SK-N-SH (cell line): ENCODE measurements at regions of chr17 and their contacts with region 1.

Region 1: GRCh38 chr17:61412143-61412859 is 12.7 kb downstream of the TBX2 start:
- DNase-seq: peak; percentile 99
- H3K4me3 ChIP-seq: peak overlapping the region; percentile 77 to 82
- H3K27ac ChIP-seq: peak overlapping the region; percentile 80 to 90
- H3K4me1 ChIP-seq: peaks cover 5 to 51% of the 10 kb centered on the region in 2 experiments; a peak in 2 of 4 replicates
- H3K27me3 ChIP-seq: no peaks in the 10 kb centered on the region
- CTCF ChIP-seq: peak; percentile 98
- EP300 ChIP-seq: no peak; a peak in 1 of 4 replicates
- RAD21 ChIP-seq: peak; percentile 96

Region 2: DNA sequence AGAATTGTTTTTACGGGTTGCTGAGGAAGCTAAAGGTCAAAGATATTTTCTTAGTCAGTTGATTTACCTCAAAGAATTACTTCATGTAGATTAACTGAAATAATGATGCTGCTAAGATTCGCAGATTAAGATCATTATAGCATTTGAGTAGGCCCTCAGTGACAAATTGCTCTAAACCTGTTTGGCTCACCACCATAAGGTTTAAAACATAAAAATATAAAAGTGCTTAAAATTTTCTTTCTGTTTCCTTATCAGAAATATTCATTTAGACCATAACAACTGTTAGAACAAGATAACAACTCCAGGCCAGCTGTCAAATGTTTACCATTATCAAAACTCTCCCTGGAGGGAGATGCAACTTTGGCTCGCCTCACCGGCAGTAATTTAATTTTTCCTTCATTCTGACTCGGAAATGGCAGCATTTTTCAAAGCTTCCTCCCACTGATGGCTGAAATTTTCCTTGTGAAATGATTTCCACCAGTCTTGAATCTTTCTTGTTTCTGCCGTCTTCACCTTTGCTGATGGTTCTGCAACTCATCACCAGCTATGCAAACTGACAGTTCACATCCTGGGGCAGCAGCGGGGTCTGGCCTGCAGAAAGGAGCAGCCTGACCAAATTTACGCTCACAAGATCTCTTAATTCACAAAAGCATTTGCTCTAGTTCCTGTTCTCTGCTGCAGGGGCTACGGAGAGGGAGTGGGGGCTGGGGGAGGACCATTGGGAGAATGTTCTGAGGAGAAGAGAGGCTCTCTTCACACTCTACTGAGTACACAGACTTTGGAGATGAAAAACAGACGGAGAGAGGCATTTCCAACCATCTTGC is 267.3 kb before region 1 on chr17:
- CTCF ChIA-PET with region 1: interaction called, 14 read pairs
- POLR2A ChIA-PET with region 1: no interaction called
- DNase-seq: peak; percentile 84
- H3K4me3 ChIP-seq: peak overlapping the region; percentile 4 to 45; a peak in 3 of 4 replicates
- H3K27ac ChIP-seq: peak overlapping the region; percentile 91 to 94
- H3K4me1 ChIP-seq: peaks cover 41 to 58% of the 10 kb centered on the region in 2 experiments
- H3K27me3 ChIP-seq: no peaks in the 10 kb centered on the region
- CTCF ChIP-seq: no peak
- EP300 ChIP-seq: peak; percentile 98 to 99
- RAD21 ChIP-seq: peak; percentile 62

Region 3: GRCh38 chr17:61265397-61265796 is 146.9 kb before region 1 on chr17:
- CTCF ChIA-PET with region 1: no interaction called
- POLR2A ChIA-PET with region 1: no interaction called
- DNase-seq: no peak
- H3K4me3 ChIP-seq: no peak overlapping the region
- H3K27ac ChIP-seq: no peak overlapping the region
- H3K4me1 ChIP-seq: peaks cover 3 to 4% of the 10 kb centered on the region in 2 experiments; a peak in 2 of 4 replicates
- H3K27me3 ChIP-seq: no peaks in the 10 kb centered on the region
- CTCF ChIP-seq: no peak
- EP300 ChIP-seq: no peak
- RAD21 ChIP-seq: no peak

Region 4: GRCh38 chr17:61399131-61400057 is 12.9 kb before region 1 on chr17 and contains the start of gene TBX2:
- CTCF ChIA-PET with region 1: interaction called, 73 read pairs
- POLR2A ChIA-PET with region 1: interaction called, 10 read pairs
- DNase-seq: peak; percentile 98
- H3K4me3 ChIP-seq: peak within 1 kb of the TSS; percentile 96 to 100
- H3K27ac ChIP-seq: peak within 1 kb of the TSS; percentile 75 to 90
- H3K4me1 ChIP-seq: peaks cover 17 to 57% of the 10 kb centered on the region in 2 experiments; a peak in 3 of 4 replicates
- H3K27me3 ChIP-seq: no peaks in the 10 kb centered on the region
- CTCF ChIP-seq: no peak; the same call in 1 of the 2 replicates
- EP300 ChIP-seq: peak in 1 of 2 experiments; percentile 12; a peak in 1 of 4 replicates
- RAD21 ChIP-seq: peak; percentile 12
- polyA plus RNA-seq, gene TBX2: 37.8 and 57.8 TPM in 2 replicates

Region 5: DNA sequence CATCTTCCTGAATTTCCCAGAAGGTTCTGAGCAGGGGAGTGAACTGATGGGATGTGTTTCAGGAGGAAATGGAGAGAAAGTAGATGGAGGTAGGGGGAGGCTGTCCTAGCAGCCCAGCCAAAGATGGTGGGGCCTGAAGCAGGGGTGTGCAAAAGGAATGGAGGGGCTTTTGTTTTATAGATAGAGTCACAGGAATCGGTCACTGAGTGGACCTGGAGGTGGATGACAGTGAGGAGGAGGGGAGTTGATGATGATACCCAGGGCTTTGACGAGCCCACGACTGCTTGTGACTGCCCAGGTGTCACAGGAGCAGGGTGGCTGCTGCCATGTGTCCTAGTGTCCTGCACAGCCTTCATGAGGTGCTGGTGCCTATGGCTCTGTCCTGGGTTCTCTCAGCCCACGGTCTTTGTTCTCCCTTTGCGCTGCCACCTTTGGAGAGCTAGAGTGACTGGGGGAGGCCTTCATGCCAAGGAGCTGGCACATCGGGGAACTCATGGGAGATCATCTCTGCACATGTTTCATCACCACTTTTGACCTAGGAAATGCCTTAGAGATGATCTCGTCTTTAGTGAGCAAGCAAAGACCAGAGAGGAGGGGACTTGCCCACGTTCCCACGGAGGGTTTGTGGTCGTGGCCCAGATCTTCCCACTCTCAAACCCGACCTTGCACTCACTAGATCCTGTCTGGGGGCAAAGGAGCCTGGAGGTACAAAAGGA is 63.3 kb after region 1 on chr17:
- CTCF ChIA-PET with region 1: interaction called, 12 read pairs
- POLR2A ChIA-PET with region 1: interaction called, 5 read pairs
- DNase-seq: no peak
- H3K4me3 ChIP-seq: no peak overlapping the region
- H3K27ac ChIP-seq: no peak overlapping the region
- H3K4me1 ChIP-seq: peaks cover 0 to 32% of the 10 kb centered on the region in 2 experiments; a peak in 1 of 4 replicates
- H3K27me3 ChIP-seq: no peaks in the 10 kb centered on the region
- CTCF ChIP-seq: no peak
- EP300 ChIP-seq: no peak
- RAD21 ChIP-seq: no peak

Region 6: DNA sequence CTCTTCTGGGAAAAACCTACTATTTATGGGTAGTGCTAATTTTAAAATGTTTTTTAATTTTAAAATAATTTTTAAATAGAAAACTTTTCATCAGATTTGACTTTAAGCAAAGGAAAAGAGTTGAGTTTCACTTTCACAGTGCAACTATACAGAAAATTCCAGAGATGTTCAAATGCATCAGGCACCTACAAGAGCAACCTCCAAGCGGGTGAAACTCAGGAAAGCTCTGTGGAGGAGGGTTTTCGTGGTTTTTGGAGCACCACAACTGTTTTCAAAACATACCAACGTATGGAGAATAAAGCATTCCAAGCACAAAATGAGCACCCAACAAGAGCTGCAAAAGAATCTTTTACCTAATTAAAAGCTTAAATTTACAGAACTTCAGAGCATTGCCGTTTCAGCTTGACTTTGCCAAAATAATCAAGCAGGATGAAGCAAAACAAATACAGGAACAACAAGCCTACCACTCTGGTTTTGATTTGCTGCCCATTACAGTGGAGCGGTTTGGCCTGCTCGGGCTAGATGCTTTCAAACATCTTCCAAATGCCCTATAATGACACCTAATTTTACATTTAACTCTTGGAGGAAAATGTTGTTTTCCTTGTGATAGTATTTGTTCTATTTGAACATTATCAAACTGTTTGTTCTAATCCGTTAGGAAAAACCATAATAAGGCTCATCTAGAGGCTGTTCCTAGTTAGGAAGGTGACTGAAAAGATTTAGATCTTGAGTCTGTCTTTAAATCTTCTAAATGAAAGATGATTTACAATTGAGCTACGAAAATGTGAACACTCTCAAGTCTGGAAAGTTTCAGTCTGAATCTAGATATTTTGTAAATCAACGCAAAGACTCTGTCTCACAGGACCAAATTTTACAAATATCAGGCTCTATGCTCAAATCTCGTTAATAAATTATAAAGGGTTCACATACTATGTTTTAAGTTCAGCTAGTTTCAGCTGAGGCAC is 144.2 kb after region 1 on chr17:
- CTCF ChIA-PET with region 1: interaction called, 111 read pairs
- POLR2A ChIA-PET with region 1: interaction called, 4 read pairs
- DNase-seq: peak; percentile 65
- H3K4me3 ChIP-seq: no peak overlapping the region
- H3K27ac ChIP-seq: peak overlapping the region in 1 of 2 experiments; percentile 78; a peak in 2 of 4 replicates
- H3K4me1 ChIP-seq: peaks cover 10 to 25% of the 10 kb centered on the region in 2 experiments; a peak in 3 of 4 replicates
- H3K27me3 ChIP-seq: no peaks in the 10 kb centered on the region
- CTCF ChIP-seq: no peak
- EP300 ChIP-seq: peak in 1 of 2 experiments; percentile 83; a peak in 2 of 4 replicates
- RAD21 ChIP-seq: no peak